AG04450 (cell line): ENCODE measurements at regions of chr16 and their contacts with region 1.

Region 1: DNA sequence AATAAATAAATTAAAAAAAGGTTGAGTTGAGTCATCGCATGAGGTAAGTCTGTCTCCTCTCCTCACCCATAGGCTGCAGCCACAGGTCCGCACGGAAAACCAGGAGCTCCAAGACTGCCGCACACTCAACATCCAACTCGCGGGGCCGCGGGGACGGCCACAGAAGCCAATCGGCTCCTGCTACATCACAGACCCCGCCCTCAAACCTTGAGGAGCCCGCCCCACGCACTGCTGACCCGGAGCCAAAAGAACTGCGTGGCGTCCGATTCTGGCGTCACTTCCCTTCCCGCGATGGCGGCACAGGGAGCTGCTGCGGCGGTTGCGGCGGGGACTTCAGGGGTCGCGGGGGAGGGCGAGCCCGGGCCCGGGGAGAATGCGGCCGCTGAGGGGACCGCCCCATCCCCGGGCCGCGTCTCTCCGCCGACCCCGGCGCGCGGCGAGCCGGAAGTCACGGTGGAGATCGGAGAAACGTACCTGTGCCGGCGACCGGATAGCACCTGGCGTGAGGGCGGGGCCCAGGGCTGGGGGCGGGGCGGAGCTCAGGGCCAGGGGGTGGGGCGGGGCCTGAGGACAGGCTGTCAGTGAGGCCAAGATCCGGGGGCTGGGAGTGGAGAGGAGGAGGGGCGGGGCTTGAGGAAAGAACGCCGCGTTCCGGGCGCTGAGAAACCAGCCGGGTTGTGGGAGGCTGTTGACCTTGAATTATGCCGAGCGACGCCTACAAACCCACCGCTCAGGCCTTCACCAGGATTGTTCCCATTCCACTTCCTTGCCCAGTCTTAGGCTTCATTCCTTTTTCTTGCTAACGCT is at the start of gene KAT8:
- DNase-seq: peak; percentile 94
- H3K4me3 ChIP-seq: peak within 1 kb of the TSS; percentile 91
- H3K27ac ChIP-seq: peak within 1 kb of the TSS; percentile 96
- H3K27me3 ChIP-seq: no peaks in the 10 kb centered on the region
- CTCF ChIP-seq: no peak
- polyA plus RNA-seq, gene KAT8: 23.0 and 24.7 TPM in 2 replicates

Region 2: DNA sequence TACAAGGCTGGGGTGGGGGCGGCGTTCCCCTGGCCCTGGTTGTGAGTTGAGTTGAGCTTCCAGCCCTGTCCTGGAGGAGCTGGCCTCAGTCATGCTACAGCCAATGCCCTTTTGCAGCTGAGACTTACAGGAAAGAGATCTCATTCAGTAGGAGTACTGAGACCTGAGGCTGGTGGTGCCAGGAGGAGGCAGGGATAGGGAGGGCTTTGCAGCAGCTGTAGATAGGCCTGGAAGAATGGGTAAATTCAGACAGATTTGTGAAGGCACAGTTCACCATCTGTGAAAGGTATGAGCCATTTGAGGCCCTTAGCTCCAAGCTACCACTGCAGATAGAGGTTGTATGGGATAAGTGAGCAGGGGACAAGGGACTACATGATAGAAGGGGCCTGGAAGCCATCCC is 78.6 kb before region 1 on chr16:
- CTCF ChIA-PET with region 1: no interaction called
- POLR2A ChIA-PET with region 1: no interaction called
- DNase-seq: no peak
- H3K4me3 ChIP-seq: no peak overlapping the region
- H3K27ac ChIP-seq: no peak overlapping the region
- H3K27me3 ChIP-seq: no peaks in the 10 kb centered on the region
- CTCF ChIP-seq: no peak

Region 3: DNA sequence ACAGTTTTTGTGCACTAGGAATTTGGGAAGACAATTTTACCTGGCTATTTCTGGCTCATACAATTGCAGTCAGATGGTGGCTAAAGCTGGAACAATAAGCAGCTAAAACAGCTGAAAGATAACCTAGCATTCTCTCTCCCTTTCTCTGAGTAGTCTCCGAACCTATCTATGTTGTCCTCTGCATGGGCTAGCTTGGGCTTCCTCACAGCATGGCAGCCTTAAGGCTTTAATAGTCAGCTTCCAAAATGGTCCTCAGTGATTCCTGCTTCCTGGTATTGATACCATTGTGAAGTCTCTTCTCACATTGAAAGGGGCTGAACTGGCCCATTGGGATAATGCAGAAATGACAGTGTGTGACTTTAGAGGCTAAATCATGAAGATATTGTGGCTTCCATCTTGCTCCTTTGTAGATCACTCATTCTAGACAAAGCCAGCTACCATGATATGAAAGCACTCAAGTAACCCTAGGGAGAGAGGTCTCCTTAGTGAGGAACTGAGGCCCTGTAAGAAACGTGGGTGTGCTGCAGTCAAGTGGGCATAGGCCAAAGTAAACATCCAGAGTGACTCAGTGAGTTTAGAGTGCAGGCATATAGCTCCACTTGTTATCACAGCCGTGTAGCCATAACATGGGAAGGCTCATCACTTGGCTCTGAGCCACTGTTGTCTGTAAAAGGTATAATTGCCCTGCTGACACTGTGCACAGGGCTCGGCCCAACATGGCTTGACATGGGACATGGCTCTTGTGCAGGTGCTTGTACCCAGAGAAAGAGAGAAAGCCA is 17.5 kb before region 1 on chr16:
- CTCF ChIA-PET with region 1: interaction called, 4 read pairs
- POLR2A ChIA-PET with region 1: interaction called, 12 read pairs
- DNase-seq: no peak
- H3K4me3 ChIP-seq: no peak overlapping the region
- H3K27ac ChIP-seq: no peak overlapping the region
- H3K27me3 ChIP-seq: no peaks in the 10 kb centered on the region
- CTCF ChIP-seq: no peak

Region 4: GRCh38 chr16:31213342-31213741 is 95.7 kb after region 1 on chr16:
- CTCF ChIA-PET with region 1: no interaction called
- POLR2A ChIA-PET with region 1: no interaction called
- DNase-seq: no peak
- H3K4me3 ChIP-seq: no peak overlapping the region
- H3K27ac ChIP-seq: no peak overlapping the region
- H3K27me3 ChIP-seq: peaks cover 55% of the 10 kb centered on the region
- CTCF ChIP-seq: no peak